SK-N-SH (cell line): ENCODE measurements at regions of chr10 and their contacts with region 1.

Region 1: DNA sequence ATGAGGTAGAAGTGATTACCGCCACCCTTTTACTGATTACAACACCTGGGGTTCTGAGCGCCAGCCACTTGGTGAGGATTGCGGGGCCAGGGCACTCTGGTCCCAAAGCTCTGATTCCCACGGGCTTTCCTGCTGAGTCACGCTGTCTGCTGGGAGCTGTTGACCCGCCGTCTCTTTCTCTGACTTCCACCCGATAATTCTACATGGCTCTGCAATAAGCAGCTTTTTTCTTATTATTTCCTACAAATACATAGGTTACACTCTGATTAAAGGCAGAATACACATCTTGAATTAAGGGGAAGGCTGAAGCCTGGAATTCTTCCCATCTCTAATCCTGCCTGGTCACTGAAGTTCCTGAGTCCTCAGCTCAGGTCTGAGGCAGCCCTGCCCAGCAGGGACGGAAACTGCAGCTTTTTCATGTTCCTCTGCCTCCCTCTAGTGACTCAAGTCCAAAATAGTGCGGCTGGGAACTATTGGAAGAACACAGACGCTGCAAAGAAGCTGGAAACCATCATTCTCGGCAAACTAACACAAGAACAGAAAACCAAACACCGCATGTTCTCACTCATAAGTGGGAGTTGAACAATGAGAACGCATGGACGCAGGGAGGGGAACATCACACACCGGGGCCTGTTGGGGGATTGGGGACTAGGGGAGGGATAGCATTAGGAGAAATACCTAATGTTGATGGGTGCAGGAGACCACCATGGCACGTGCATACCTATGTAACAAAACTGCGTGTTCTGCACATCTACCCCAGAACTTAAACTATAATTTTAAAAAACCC is 178.3 kb downstream of the PRKCQ start:
- DNase-seq: peak; percentile 82
- H3K4me3 ChIP-seq: peak overlapping the region; percentile 36 to 40; a peak in 3 of 4 replicates
- H3K27ac ChIP-seq: peak overlapping the region; percentile 23 to 78; a peak in 3 of 4 replicates
- H3K4me1 ChIP-seq: peaks cover 0 to 7% of the 10 kb centered on the region in 2 experiments; a peak in 1 of 4 replicates
- H3K27me3 ChIP-seq: no peaks in the 10 kb centered on the region
- CTCF ChIP-seq: peak; percentile 91
- EP300 ChIP-seq: no peak
- RAD21 ChIP-seq: peak; percentile 93

Region 2: DNA sequence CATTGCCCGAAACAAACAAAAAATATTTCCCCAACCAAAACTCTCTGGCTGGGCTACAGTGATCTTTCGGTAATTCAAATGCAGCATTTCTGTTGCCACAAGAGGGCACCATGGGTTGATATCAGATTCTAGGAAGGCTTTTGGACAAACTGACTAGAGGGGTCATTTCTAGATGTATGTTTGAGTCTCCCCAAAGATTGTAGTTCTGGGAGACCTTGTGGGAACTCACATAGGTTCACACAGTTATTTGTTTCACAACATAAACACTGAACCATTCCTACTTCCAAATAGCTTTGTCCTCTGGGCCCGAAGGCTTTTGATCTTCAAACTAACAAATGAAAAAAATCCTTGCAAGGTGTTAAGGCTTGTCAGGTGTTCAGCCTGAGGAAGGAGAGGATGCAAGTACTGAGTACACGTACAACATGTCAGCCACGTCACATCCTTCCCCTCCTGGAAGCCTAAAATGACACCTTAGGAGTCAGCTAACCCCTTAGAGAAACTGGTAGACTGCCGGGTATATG is 387.5 kb before region 1 on chr10:
- CTCF ChIA-PET with region 1: interaction called, 22 read pairs
- POLR2A ChIA-PET with region 1: no interaction called
- DNase-seq: peak; percentile 52
- H3K4me3 ChIP-seq: peak overlapping the region in 1 of 2 experiments; percentile 40; a peak in 1 of 4 replicates
- H3K27ac ChIP-seq: no peak overlapping the region
- H3K4me1 ChIP-seq: no peaks in the 10 kb centered on the region; a peak in 1 of 4 replicates
- H3K27me3 ChIP-seq: no peaks in the 10 kb centered on the region; the same call in 1 of the 2 replicates
- CTCF ChIP-seq: peak; percentile 77
- EP300 ChIP-seq: no peak
- RAD21 ChIP-seq: peak; percentile 57

Region 3: DNA sequence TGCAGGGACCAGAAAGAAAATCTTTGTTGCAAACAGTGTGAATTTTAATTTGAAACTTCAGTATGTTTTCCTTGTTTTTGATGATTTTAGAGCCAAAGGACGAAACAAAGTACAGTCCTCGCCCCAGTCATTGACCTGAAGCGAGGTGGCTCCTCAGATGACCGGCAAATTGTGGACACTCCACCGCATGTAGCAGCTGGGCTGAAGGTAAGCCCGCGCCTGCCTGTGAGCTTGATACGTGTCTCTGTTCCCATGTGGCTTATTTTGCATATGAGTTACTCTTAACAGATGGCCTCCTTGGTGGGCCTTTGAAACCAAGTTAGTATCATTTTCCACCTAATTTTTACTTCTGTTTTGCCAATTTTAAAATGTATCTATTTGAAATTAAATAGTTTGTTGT is 300.6 kb before region 1 on chr10:
- CTCF ChIA-PET with region 1: interaction called, 22 read pairs
- POLR2A ChIA-PET with region 1: no interaction called
- DNase-seq: no peak
- H3K4me3 ChIP-seq: no peak overlapping the region
- H3K27ac ChIP-seq: no peak overlapping the region
- H3K4me1 ChIP-seq: no peaks in the 10 kb centered on the region
- H3K27me3 ChIP-seq: no peaks in the 10 kb centered on the region
- CTCF ChIP-seq: no peak
- EP300 ChIP-seq: no peak
- RAD21 ChIP-seq: no peak

Region 4: DNA sequence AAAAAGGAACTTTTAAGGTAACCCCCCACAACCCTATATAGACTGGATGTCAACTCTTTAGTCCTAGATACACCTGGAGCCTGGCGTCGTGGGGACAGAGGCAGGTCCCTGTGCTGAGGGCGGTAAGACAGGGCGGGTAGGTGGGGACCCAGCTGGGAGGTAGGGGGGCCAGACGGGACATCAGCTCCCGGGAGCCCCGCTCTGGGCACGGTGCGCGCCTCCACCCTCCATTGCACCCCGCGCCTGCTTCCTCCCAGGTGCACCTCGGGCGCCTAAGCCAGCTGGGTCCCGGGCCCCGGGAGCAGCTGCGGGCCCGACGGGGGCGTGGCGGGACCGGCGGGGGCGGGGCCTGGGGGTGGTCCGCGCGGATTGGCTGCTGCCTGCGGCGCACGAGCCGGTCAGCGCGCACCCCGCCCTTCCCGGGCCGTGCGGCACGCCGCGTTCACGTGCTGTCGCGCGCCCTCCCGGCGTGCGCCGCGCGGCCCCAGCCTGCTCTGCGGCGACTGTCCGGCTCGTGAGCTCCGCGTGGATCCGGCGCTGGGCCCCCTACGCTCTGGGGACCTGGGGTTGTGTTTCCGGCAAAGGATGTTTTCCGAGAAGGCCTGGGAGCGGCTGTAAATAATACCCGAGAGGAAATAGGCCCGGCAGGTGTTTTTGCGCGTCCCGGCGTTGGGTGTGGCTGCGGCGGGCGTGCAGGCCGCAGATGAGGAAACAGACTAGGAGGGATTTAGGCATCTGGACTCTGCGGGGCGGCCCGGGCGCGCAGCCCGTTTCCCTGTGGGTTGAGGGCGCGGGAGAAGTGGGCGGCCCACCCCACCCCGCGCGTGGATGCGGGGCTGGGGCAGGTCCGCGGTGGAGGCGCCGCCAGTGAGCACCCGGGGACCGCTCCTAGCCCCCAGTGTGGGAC is 238.1 kb before region 1 on chr10:
- CTCF ChIA-PET with region 1: interaction called, 10 read pairs
- POLR2A ChIA-PET with region 1: no interaction called
- DNase-seq: peak; percentile 92
- H3K4me3 ChIP-seq: peak overlapping the region; percentile 50 to 52
- H3K27ac ChIP-seq: peak overlapping the region in 1 of 2 experiments; percentile 56; a peak in 1 of 4 replicates
- H3K4me1 ChIP-seq: peaks cover 5 to 6% of the 10 kb centered on the region in 2 experiments; a peak in 2 of 4 replicates
- H3K27me3 ChIP-seq: no peaks in the 10 kb centered on the region
- CTCF ChIP-seq: no peak
- EP300 ChIP-seq: no peak
- RAD21 ChIP-seq: no peak

Region 5: DNA sequence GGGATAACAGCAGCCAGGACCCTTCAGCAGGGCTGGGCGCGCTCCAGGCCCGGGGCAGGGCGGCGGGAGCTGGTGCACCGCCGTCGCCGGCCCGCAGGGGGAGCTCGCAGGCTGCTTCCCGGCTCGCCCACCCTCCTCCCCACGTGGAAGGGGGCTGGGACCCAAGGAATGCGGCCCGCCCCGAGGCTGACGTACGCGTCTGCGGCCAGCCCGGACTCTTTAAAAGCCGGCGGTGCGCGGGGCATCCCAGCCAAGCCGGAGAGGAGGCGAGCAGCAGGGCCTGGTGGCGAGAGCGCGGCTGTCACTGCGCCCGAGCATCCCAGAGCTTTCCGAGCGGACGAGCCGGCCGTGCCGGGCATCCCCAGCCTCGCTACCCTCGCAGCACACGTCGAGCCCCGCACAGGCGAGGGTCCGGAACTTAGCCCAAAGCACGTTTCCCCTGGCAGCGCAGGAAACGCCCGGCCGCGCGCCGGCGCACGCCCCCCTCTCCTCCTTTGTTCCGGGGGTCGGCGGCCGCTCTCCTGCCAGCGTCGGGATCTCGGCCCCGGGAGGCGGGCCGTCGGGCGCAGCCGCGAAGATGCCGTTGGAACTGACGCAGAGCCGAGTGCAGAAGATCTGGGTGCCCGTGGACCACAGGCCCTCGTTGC is 198.9 kb before region 1 on chr10 and contains the start of gene PFKFB3:
- CTCF ChIA-PET with region 1: interaction called, 159 read pairs
- POLR2A ChIA-PET with region 1: interaction called, 29 read pairs
- DNase-seq: peak; percentile 98
- H3K4me3 ChIP-seq: peak within 1 kb of the TSS; percentile 74 to 79
- H3K27ac ChIP-seq: peak within 1 kb of the TSS; percentile 64 to 95
- H3K4me1 ChIP-seq: peaks cover 9 to 16% of the 10 kb centered on the region in 2 experiments; a peak in 3 of 4 replicates
- H3K27me3 ChIP-seq: no peaks in the 10 kb centered on the region
- CTCF ChIP-seq: peak; percentile 85
- EP300 ChIP-seq: peak in 1 of 2 experiments; percentile 42; a peak in 1 of 4 replicates
- RAD21 ChIP-seq: peak; percentile 81
- polyA plus RNA-seq, gene PFKFB3: 33.0 and 59.7 TPM in 2 replicates

Region 6: GRCh38 chr10:6242089-6242488 is 159.7 kb before region 1 on chr10:
- CTCF ChIA-PET with region 1: interaction called, 17 read pairs
- POLR2A ChIA-PET with region 1: no interaction called
- DNase-seq: no peak
- H3K4me3 ChIP-seq: no peak overlapping the region
- H3K27ac ChIP-seq: no peak overlapping the region
- H3K4me1 ChIP-seq: peaks cover 0 to 6% of the 10 kb centered on the region in 2 experiments; a peak in 2 of 4 replicates
- H3K27me3 ChIP-seq: no peaks in the 10 kb centered on the region
- CTCF ChIP-seq: no peak
- EP300 ChIP-seq: no peak
- RAD21 ChIP-seq: no peak

Region 7: DNA sequence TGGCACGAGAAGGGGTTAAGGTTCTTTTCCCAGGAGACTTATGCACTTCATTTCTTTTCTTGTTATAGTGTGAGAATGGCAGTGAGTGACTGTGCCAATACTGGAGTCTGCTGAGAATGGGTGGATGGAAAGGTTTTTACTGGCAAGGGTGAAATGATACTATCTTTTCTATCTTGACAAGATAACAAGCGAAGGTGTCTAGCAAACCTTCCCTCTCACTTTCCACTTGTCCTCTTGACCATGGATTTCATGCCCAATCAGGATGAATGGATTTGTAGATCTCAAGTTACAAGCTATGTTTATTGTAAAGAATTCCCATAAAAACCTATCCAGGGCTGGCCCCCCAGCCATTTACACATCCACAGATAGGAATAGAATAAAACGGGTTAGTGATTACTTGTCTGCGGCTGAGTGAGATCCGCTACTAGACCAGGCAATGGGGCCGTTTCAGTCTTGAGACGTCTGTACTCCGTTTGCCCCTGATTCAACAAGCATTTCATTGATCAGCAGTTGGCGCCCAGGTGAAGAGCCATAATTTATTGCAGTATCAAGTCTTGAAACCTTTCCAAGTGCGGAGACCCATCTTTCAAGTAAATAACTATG is 25.7 kb after region 1 on chr10:
- CTCF ChIA-PET with region 1: no interaction called
- POLR2A ChIA-PET with region 1: no interaction called
- DNase-seq: no peak
- H3K4me3 ChIP-seq: no peak overlapping the region
- H3K27ac ChIP-seq: no peak overlapping the region
- H3K4me1 ChIP-seq: no peaks in the 10 kb centered on the region
- H3K27me3 ChIP-seq: peaks cover 5% of the 10 kb centered on the region; the same call in 1 of the 2 replicates
- CTCF ChIP-seq: no peak
- EP300 ChIP-seq: no peak
- RAD21 ChIP-seq: no peak

Region 8: DNA sequence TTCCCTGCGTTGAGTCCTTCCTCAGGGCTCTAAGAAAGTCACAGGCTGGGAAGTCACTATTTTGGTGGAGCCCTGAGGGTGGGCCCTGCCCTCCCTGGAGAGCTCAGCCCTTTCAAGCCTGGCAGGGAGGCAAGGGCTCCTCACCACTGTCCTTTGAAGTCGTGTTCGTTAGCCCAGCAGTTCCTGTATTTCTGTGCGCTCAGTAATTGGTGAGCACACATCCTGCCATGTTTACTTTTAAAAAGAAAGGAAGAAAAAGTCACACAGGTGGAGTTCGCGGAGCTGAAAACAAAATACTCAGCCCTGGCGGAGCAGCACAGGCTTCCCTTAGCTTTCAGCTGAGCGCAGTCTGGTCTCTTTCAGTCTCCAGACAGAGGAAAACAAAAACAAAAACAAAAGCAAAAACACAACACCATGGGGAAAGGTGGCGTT is 141.3 kb after region 1 on chr10:
- CTCF ChIA-PET with region 1: no interaction called
- POLR2A ChIA-PET with region 1: no interaction called
- DNase-seq: no peak
- H3K4me3 ChIP-seq: no peak overlapping the region
- H3K27ac ChIP-seq: no peak overlapping the region
- H3K4me1 ChIP-seq: no peaks in the 10 kb centered on the region
- H3K27me3 ChIP-seq: no peaks in the 10 kb centered on the region
- CTCF ChIP-seq: no peak
- EP300 ChIP-seq: no peak
- RAD21 ChIP-seq: no peak